Esophagus muscularis mucosa (tissue), 4 donors: ENCODE measurements at regions of chr6 and their contacts with region 1.

Region 1: DNA sequence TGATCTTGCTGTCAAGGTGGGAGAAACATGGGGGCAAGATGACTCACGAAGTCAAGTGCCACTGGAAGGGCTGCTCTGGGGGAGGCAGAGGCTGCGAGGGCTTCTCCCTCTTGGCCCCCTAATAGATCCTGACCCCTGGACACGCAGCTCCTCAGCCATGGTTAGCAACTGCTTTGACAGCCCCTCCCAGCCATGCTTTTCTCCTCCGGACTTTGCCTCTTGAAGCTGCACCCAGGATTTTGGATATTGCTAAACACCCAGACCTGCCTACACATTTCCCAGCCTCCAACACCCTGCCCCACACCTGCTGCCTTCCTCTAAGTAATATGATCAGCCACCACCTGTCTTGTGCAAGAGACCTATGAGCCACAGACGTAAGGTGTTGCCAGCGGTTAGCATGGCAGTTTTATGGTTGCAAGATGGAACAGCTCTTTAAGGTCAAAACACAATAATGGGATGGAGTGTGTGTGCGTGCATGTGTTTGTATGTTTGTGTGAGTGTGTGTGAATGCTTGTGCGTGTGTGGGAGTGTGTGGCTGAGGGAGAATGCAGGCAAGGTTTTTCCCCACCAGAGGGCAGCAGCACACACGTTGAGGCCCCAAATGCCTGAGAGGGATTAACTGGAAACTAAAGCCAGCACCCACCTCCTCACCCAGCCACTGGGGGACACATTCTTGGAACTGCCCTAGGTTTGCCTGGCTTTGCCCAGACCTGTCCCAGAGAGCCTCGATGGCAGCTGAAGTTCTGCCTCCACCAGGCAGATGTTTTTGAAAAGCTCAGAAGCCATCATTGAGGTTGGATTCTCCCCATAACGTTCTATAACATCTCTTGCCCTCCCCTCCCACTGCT is 2.5 kb downstream of the IP6K3 start:
- DNase-seq: no peak
- H3K4me3 ChIP-seq: peak overlapping the region in 2 of 4 donors; percentile 4 to 5
- H3K27ac ChIP-seq: peak overlapping the region in 1 of 4 donors; percentile 2
- H3K4me1 ChIP-seq: peaks cover 0 to 20% (median 11%) of the 10 kb centered on the region in 4 donors
- H3K27me3 ChIP-seq: peaks cover 0 to 50% (median 0%) of the 10 kb centered on the region in 4 donors
- CTCF ChIP-seq: peak; percentile 76 to 96 (median 84)
- EP300 ChIP-seq: no peak
- POLR2A ChIP-seq: peak; percentile 15

Region 2: GRCh38 chr6:33914645-33915044 is 170.4 kb after region 1 on chr6:
- intact Hi-C with region 1: no loop called
- DNase-seq: no peak
- H3K4me3 ChIP-seq: no peak overlapping the region
- H3K27ac ChIP-seq: no peak overlapping the region
- H3K4me1 ChIP-seq: peaks cover 0 to 13% (median 0%) of the 10 kb centered on the region in 4 donors
- H3K27me3 ChIP-seq: no peaks in the 10 kb centered on the region
- CTCF ChIP-seq: no peak
- EP300 ChIP-seq: no peak
- POLR2A ChIP-seq: no peak

Region 3: DNA sequence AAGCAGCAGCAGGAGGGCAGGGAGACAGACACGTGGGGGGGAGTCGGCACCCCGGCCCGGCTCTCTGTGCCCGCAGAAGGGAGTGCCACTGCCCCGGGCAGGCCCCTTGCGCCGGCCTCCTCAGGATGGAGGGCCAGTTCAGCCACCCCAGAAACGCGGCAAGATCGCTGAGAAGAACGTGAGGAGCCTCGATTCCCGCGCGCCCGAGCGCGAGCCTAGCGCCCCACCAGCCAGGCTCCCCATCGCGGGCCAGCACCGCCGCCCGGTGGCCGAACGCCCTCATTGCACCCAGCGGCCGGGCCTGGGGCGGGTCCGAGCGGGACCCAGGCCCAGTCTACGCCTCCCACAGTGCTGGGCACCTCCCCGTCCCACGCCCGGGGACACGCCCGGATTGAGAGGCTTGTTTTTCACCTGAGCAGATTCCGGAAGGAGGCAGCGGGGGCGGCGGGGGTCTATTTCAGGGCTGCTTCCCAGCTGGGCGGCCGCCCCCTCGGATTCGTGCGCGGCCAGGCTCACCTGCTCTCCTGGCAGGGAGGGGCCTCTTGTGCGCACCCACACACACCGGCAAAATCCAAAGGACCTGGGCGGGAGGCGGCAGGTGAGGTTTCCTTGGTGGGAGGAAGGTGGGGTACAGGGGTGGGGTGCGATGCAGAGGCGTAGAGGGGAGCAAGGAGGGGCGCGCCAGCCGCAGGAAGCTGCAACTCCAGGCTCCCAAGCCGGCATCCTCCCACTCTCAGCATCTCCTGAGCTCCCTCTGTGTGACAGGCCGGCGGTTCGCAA is 410.6 kb after region 1 on chr6:
- intact Hi-C with region 1: loop called (anchors 5 kb)
- DNase-seq: no peak
- H3K4me3 ChIP-seq: peak overlapping the region; percentile 15 to 44 (median 24)
- H3K27ac ChIP-seq: no peak overlapping the region
- H3K4me1 ChIP-seq: peaks cover 5 to 10% (median 8%) of the 10 kb centered on the region in 4 donors
- H3K27me3 ChIP-seq: peaks cover 4 to 81% (median 21%) of the 10 kb centered on the region in 4 donors
- CTCF ChIP-seq: peak; percentile 90 to 98 (median 95)
- EP300 ChIP-seq: no peak
- POLR2A ChIP-seq: no peak